ENCODE measurements at regions of chr10 and their contacts with region 1.

Region 1: DNA sequence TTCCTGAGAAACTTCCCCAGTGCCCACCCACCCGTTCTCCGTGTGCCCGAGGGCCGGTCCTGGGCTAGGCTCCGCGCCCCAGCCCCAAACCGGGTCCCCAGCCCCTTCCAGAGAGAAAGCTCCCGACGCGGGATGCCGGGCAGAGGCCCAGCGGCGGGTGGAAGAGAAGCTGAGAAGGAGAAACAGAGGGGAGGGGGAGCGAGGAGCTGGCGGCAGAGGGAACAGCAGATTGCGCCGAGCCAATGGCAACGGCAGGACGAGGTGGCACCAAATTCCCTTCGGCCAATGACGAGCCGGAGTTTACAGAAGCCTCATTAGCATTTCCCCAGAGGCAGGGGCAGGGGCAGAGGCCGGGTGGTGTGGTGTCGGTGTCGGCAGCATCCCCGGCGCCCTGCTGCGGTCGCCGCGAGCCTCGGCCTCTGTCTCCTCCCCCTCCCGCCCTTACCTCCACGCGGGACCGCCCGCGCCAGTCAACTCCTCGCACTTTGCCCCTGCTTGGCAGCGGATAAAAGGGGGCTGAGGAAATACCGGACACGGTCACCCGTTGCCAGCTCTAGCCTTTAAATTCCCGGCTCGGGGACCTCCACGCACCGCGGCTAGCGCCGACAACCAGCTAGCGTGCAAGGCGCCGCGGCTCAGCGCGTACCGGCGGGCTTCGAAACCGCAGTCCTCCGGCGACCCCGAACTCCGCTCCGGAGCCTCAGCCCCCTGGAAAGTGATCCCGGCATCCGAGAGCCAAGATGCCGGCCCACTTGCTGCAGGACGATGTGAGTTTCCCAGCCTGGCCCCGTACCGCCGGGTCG is at the start of gene SCD:
- DNase-seq: peak; percentile 58 to 78 (median 68)
- ATAC-seq: peak; percentile 65 to 88 (median 86)
- H3K4me3 ChIP-seq: peak within 1 kb of the TSS; percentile 24 to 60 (median 42)
- H3K27ac ChIP-seq: peak within 1 kb of the TSS in 1 of 4 donors; percentile 50
- H3K4me1 ChIP-seq: no peaks in the 10 kb centered on the region
- H3K27me3 ChIP-seq: no peaks in the 10 kb centered on the region
- CTCF ChIP-seq: no peak
- total RNA-seq, gene SCD: 1.9 to 87.6 (median 9.7) TPM

Region 2: GRCh38 chr10:99917963-99918825 is 428.8 kb before region 1 on chr10:
- intact Hi-C with region 1: no loop called
- DNase-seq: peak in 1 of 6 donors; percentile 25
- ATAC-seq: peak; percentile 9 to 43 (median 36)
- H3K4me3 ChIP-seq: peak overlapping the region in 2 of 4 donors; percentile 9 to 26
- H3K27ac ChIP-seq: peak overlapping the region; percentile 8 to 73 (median 68)
- H3K4me1 ChIP-seq: peaks cover 24 to 40% (median 37%) of the 10 kb centered on the region in 3 donors
- H3K27me3 ChIP-seq: no peaks in the 10 kb centered on the region
- CTCF ChIP-seq: no peak

Region 3: DNA sequence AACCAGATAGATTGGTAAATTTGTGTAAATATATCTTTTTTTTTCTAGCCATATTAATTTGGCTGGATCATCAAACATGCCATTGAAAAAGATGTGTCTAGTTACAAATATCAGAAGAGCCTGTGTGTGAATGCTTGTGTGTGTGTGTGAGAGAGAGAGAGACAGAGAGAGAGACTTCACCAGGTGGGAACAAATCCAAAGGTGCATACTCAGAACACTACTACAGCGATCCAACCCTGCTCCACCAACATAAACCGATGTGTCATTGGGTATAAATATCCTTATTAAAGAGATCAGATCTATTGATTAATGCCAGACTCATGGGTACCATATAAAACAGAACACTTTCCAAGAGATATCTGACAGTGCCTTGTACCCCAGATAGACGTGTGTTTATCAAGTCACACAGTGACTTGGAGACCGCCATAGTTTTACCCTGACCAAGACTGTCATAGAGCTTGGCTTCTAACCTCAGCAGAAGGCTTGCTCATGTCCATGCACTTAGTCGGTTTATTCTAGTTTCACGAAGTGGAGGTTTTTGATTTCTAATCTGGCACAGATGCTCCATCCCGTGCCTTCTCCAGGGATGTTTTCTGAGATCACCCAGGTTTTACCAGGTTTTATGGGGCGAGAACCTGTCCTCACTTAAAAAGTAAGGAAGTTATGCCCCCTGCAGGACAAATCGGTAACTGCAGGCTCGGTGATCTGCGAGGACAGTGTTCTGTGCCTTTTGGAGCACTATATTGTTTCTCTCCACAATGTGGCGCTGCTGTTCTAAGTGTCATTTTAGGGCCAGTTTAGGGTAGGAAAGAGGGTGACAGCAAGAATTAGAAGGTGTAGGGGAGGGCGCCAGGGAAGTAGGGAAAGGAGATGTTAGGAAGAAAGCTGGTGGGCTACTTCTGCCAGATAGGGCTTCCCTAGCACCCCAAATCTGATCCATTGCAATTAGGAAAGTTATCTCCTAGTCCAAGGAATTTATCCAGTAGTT is 86.6 kb after region 1 on chr10:
- intact Hi-C with region 1: loop called in 2 of 3 experiments (anchors 5 to 10 kb)
- DNase-seq: peak; percentile 85 to 98 (median 94)
- ATAC-seq: peak; percentile 95 to 100 (median 98)
- H3K4me3 ChIP-seq: no peak overlapping the region
- H3K27ac ChIP-seq: no peak overlapping the region
- H3K4me1 ChIP-seq: no peaks in the 10 kb centered on the region
- H3K27me3 ChIP-seq: peaks cover 0 to 5% (median 0%) of the 10 kb centered on the region in 4 donors
- CTCF ChIP-seq: peak; percentile 95 to 99 (median 98)

Region 4: DNA sequence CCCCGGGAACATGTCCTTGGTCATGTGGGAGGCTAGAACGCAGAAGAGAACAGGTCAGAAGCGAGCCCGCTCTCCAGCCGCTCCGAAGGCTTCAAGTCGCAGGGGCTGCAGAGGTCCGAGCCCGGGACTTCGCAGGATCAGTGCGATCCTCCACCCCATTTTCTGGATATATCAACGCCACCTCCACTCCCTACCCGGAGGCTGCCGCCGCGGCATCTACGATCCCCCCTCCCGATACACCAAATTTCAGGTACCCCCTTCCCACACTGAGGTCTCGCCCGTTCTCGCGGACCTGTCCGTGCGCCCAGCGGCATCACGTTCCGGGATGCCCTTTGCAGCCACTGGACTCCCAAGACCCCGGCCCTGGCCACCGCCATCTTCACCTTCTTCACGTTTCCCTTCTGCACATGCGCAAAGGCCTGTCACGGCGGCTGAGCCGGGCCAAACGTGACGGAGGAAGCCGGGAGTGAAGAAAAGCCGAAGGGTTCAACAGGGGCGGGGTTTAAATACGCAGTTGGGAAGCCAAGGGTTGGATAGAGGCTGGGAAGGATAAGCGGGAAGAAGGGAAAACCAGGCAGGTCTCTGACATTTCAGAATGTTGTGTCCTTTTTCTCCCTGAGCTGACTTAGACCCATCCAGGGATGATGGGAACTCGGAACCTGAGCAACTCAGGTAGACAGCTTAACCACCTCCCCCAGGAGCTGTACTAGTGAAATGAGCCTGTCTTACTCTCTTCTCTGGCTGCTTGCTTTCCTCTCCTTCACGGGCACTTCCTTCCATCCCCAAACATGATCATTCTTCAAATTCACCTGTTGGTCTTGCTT is 182.7 kb after region 1 on chr10 and contains the start of gene NDUFB8:
- intact Hi-C with region 1: loop called in 1 of 3 experiments (anchors 10 kb)
- DNase-seq: peak; percentile 83 to 95 (median 88)
- ATAC-seq: peak; percentile 95 to 98 (median 96)
- H3K4me3 ChIP-seq: peak within 1 kb of the TSS; percentile 60 to 82 (median 81)
- H3K27ac ChIP-seq: peak within 1 kb of the TSS in 2 of 4 donors; percentile 20 to 30
- H3K4me1 ChIP-seq: peaks cover 0 to 12% (median 9%) of the 10 kb centered on the region in 3 donors
- H3K27me3 ChIP-seq: no peaks in the 10 kb centered on the region
- CTCF ChIP-seq: no peak
- total RNA-seq, gene NDUFB8: 35.5 to 60.6 (median 48.5) TPM

Measured in pancreas (tissue), 10 donors.